Activated B cell treated with CpG ODN at 0.5 μM for 24 hours (primary cell): ENCODE measurements at regions of chr19 and their contacts with region 1.

Region 1: GRCh38 chr19:2867025-2867991 is at the start of gene ZNF556:
- DNase-seq: no peak
- ATAC-seq: no peak
- H3K4me3 Mint-ChIP-seq: no peak within 1 kb of the TSS
- H3K27ac Mint-ChIP-seq: no peak within 1 kb of the TSS
- H3K4me1 Mint-ChIP-seq: peaks cover 3% of the 10 kb centered on the region
- H3K27me3 Mint-ChIP-seq: peaks cover 13% of the 10 kb centered on the region
- CTCF ChIP-seq: no peak
- total RNA-seq, gene ZNF556: not detected in 2 replicates

Region 2: GRCh38 chr19:2648528-2648937 is 218.8 kb before region 1 on chr19:
- CTCF ChIA-PET with region 1: interaction called, 20 read pairs
- POLR2A ChIA-PET with region 1: no interaction called
- intact Hi-C with region 1: no loop called
- DNase-seq: peak; percentile 75
- ATAC-seq: peak; percentile 87
- H3K4me3 Mint-ChIP-seq: no peak overlapping the region
- H3K27ac Mint-ChIP-seq: peak overlapping the region; percentile 35
- H3K4me1 Mint-ChIP-seq: peaks cover 43% of the 10 kb centered on the region
- H3K27me3 Mint-ChIP-seq: no peaks in the 10 kb centered on the region
- CTCF ChIP-seq: no peak

Region 3: GRCh38 chr19:2750808-2751443 is 116.4 kb before region 1 on chr19:
- CTCF ChIA-PET with region 1: interaction called, 3 read pairs
- POLR2A ChIA-PET with region 1: no interaction called
- intact Hi-C with region 1: loop called (anchors 2 kb)
- DNase-seq: no peak
- ATAC-seq: no peak
- H3K4me3 Mint-ChIP-seq: no peak overlapping the region
- H3K27ac Mint-ChIP-seq: no peak overlapping the region
- H3K4me1 Mint-ChIP-seq: peaks cover 12% of the 10 kb centered on the region
- H3K27me3 Mint-ChIP-seq: no peaks in the 10 kb centered on the region
- CTCF ChIP-seq: no peak

Region 4: GRCh38 chr19:2820112-2820702 is 47.1 kb before region 1 on chr19:
- CTCF ChIA-PET with region 1: no interaction called
- POLR2A ChIA-PET with region 1: no interaction called
- intact Hi-C with region 1: loop called (anchors 1 kb)
- DNase-seq: no peak
- ATAC-seq: no peak
- H3K4me3 Mint-ChIP-seq: peak overlapping the region; percentile 83
- H3K27ac Mint-ChIP-seq: no peak overlapping the region
- H3K4me1 Mint-ChIP-seq: peaks cover 14% of the 10 kb centered on the region
- H3K27me3 Mint-ChIP-seq: no peaks in the 10 kb centered on the region
- CTCF ChIP-seq: no peak